IMR-90 (cell line): ENCODE measurements at regions of chr5 and their contacts with region 1.

Region 1: GRCh38 chr5:112146323-112147226 is 272.5 kb downstream of the EPB41L4A start:
- DNase-seq: peak; percentile 93
- ATAC-seq: peak; percentile 96
- H3K4me3 ChIP-seq: no peak overlapping the region
- H3K27ac ChIP-seq: peak overlapping the region; percentile 68; the same call in 1 of the 2 replicates
- H3K4me1 ChIP-seq: peaks cover 3% of the 10 kb centered on the region; the same call in 1 of the 2 replicates
- H3K27me3 ChIP-seq: no peaks in the 10 kb centered on the region
- CTCF ChIP-seq: peak; percentile 87
- POLR2A ChIP-seq: no peak
- RAD21 ChIP-seq: peak; percentile 96

Region 2: GRCh38 chr5:111158105-111158744 is 988.4 kb before region 1 on chr5:
- CTCF ChIA-PET with region 1: no interaction called
- POLR2A ChIA-PET with region 1: no interaction called
- dilution Hi-C with region 1: no loop called
- in situ Hi-C with region 1: loop called (anchors 10 kb)
- intact Hi-C with region 1: loop called (anchors 1 kb)
- DNase-seq: peak; percentile 85
- ATAC-seq: peak; percentile 95
- H3K4me3 ChIP-seq: no peak overlapping the region
- H3K27ac ChIP-seq: no peak overlapping the region
- H3K4me1 ChIP-seq: no peaks in the 10 kb centered on the region
- H3K27me3 ChIP-seq: no peaks in the 10 kb centered on the region
- CTCF ChIP-seq: peak; percentile 99
- POLR2A ChIP-seq: 0 out of 2 replicates have a peak, but pooled peaks have one; percentile 28
- RAD21 ChIP-seq: peak; percentile 97

Region 3: GRCh38 chr5:111550279-111551020 is 596.1 kb before region 1 on chr5:
- CTCF ChIA-PET with region 1: interaction called, 6 read pairs
- POLR2A ChIA-PET with region 1: no interaction called
- dilution Hi-C with region 1: no loop called
- in situ Hi-C with region 1: loop called (anchors 5 kb)
- intact Hi-C with region 1: loop called (anchors 1 kb)
- DNase-seq: peak; percentile 99
- ATAC-seq: peak; percentile 96
- H3K4me3 ChIP-seq: no peak overlapping the region
- H3K27ac ChIP-seq: no peak overlapping the region
- H3K4me1 ChIP-seq: no peaks in the 10 kb centered on the region; the same call in 1 of the 2 replicates
- H3K27me3 ChIP-seq: no peaks in the 10 kb centered on the region
- CTCF ChIP-seq: peak; percentile 81
- POLR2A ChIP-seq: no peak
- RAD21 ChIP-seq: peak; percentile 91

Region 4: GRCh38 chr5:111742177-111742994 is 404.2 kb before region 1 on chr5:
- CTCF ChIA-PET with region 1: no interaction called
- POLR2A ChIA-PET with region 1: no interaction called
- dilution Hi-C with region 1: no loop called
- in situ Hi-C with region 1: no loop called
- intact Hi-C with region 1: loop called (anchors 2 kb)
- DNase-seq: peak; percentile 93
- ATAC-seq: peak; percentile 63
- H3K4me3 ChIP-seq: no peak overlapping the region
- H3K27ac ChIP-seq: peak overlapping the region; percentile 5; the same call in 1 of the 2 replicates
- H3K4me1 ChIP-seq: peaks cover 32% of the 10 kb centered on the region
- H3K27me3 ChIP-seq: no peaks in the 10 kb centered on the region
- CTCF ChIP-seq: no peak
- POLR2A ChIP-seq: no peak
- RAD21 ChIP-seq: no peak

Region 5: DNA sequence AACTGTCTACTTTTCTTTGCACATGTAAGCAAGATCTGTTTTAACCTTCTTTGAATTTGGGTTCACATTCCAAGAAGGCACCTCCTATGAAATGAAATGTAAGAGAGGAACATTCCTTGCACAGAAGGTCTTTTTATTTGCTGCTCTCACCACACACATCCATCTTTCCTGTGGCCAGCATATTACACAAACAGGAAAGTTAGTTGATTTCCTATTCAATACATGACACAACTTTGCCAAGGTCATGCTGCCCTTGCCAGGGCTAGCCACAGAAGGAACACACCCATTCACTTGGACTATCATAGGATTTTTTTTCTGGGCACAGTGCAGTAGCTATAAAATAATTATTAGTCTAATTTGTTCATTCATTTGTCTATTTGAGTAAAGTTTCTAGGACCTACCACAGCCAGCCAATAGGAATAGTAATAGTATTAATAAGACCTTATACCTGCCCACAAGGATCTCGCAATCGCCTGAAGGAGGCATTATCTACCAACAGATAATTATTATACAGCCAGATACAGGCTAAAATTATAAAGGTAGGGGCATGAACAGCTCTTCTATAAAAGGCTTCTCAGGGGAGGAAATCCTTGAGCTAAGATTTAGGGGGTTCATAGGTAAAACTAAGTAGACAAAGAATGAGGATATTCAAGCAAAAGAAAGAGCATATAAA is 311.5 kb before region 1 on chr5:
- CTCF ChIA-PET with region 1: no interaction called
- POLR2A ChIA-PET with region 1: no interaction called
- dilution Hi-C with region 1: no loop called
- in situ Hi-C with region 1: no loop called
- intact Hi-C with region 1: loop called (anchors 1 kb)
- DNase-seq: peak; percentile 32
- ATAC-seq: no peak
- H3K4me3 ChIP-seq: no peak overlapping the region
- H3K27ac ChIP-seq: no peak overlapping the region
- H3K4me1 ChIP-seq: no peaks in the 10 kb centered on the region; the same call in 1 of the 2 replicates
- H3K27me3 ChIP-seq: no peaks in the 10 kb centered on the region
- CTCF ChIP-seq: peak; percentile 26; the same call in 1 of the 2 replicates
- POLR2A ChIP-seq: no peak
- RAD21 ChIP-seq: peak; percentile 38; the same call in 1 of the 2 replicates

Region 6: DNA sequence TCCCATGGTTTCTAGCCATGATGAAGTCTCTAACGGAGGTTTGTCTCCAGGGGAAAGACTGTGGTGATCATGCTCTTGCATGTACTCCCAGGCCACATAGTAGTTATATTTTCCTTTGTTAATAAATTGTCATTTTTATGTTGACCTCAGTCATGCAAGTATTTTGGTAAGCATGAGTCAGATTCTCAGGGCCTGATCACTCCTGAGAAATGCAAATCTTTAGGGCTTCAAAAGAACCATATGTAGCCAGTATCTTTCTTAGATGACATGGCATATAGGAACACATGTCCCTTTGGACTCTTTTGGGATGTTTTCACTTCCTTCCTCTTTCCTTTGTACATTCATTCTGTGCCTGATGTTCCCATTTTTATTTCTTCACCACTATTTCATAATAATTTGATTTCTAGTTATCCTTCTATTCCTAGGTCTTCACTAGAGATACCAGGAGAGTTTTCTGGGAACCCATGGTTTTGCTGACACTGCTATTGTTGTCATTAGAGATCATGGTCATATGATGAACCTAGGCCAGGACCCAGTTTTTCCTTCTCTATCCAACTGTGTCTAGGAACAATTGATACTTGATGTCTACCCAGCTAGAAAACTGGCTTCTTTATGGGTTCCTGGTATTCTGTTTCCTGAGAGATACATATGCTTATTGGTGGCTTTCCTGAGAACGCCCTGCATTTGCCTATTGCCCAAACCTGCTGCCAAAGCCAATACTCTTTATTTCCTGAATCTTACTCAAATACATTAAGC is 141.5 kb before region 1 on chr5:
- CTCF ChIA-PET with region 1: no interaction called
- POLR2A ChIA-PET with region 1: no interaction called
- dilution Hi-C with region 1: no loop called
- in situ Hi-C with region 1: loop called (anchors 10 kb)
- intact Hi-C with region 1: no loop called
- DNase-seq: peak; percentile 92
- ATAC-seq: peak; percentile 66
- H3K4me3 ChIP-seq: no peak overlapping the region
- H3K27ac ChIP-seq: peak overlapping the region; percentile 80
- H3K4me1 ChIP-seq: peaks cover 13% of the 10 kb centered on the region
- H3K27me3 ChIP-seq: no peaks in the 10 kb centered on the region
- CTCF ChIP-seq: no peak
- POLR2A ChIP-seq: no peak
- RAD21 ChIP-seq: no peak

Region 7: DNA sequence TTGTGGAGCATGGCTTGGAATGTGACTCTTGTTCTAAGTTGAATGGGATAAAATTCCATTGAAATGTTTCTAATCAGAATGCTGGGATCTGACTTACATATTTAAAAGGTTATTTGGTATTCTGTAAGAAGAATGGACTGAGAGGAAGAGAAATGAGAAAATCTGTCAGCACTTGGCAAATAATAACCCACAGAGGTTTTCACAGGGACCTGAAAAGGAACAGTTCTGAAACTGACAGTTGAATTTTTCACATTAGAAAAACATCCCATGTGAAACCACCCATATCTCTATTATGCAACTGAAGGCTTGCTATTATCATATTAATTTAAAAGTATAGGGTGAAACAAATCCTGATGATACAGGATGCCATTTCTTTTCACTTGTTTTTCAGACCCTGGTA is 30.2 kb before region 1 on chr5:
- CTCF ChIA-PET with region 1: no interaction called
- POLR2A ChIA-PET with region 1: no interaction called
- dilution Hi-C with region 1: no loop called
- in situ Hi-C with region 1: no loop called
- intact Hi-C with region 1: no loop called
- DNase-seq: no peak
- ATAC-seq: no peak
- H3K4me3 ChIP-seq: no peak overlapping the region
- H3K27ac ChIP-seq: no peak overlapping the region
- H3K4me1 ChIP-seq: no peaks in the 10 kb centered on the region
- H3K27me3 ChIP-seq: no peaks in the 10 kb centered on the region
- CTCF ChIP-seq: no peak
- POLR2A ChIP-seq: no peak
- RAD21 ChIP-seq: no peak